ENCODE measurements at regions of chr6 and their contacts with region 1.

Region 1: GRCh38 chr6:38671885-38672467 is 31.0 kb downstream of the GLO1 start:
- DNase-seq: peak; percentile 46
- H3K4me3 Mint-ChIP-seq: no peak overlapping the region
- H3K27ac Mint-ChIP-seq: no peak overlapping the region
- H3K4me1 Mint-ChIP-seq: peaks cover 8% of the 10 kb centered on the region
- H3K27me3 Mint-ChIP-seq: no peaks in the 10 kb centered on the region
- CTCF ChIP-seq: no peak

Region 2: DNA sequence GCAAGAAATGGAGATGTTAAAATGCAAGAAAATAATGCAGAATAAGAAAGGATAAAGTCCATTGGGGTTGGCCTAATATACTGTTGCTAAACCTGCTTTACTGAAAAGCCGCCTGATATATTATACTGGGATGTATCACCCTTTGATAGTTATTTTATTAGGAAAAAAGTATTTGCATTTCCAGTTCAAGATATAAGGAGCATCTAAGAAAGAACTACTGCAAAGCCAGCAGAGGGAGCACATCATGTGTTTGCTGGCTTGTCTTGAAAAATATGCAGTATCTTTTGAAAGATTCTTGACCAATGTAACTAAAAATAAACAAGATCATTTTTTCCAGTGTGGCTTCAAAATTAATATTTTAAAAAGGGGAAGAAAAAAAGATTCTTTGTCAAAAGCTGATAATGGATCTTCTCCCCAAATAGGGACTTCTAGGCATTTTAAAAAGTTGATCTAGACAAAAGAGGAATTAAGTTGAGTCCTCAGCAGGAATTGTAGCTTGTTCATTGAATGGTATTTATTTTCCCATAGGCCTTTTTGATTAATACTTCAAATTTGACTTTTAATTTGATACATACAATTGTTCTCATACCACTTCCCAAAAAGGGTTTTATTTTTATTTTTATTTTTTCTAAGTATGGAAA is 637.6 kb before region 1 on chr6:
- CTCF ChIA-PET with region 1: no interaction called
- intact Hi-C with region 1: loop called (anchors 10 kb)
- DNase-seq: no peak
- H3K4me3 Mint-ChIP-seq: no peak overlapping the region
- H3K27ac Mint-ChIP-seq: no peak overlapping the region
- H3K4me1 Mint-ChIP-seq: peaks cover 27% of the 10 kb centered on the region
- H3K27me3 Mint-ChIP-seq: no peaks in the 10 kb centered on the region
- CTCF ChIP-seq: peak; percentile 25

Region 3: DNA sequence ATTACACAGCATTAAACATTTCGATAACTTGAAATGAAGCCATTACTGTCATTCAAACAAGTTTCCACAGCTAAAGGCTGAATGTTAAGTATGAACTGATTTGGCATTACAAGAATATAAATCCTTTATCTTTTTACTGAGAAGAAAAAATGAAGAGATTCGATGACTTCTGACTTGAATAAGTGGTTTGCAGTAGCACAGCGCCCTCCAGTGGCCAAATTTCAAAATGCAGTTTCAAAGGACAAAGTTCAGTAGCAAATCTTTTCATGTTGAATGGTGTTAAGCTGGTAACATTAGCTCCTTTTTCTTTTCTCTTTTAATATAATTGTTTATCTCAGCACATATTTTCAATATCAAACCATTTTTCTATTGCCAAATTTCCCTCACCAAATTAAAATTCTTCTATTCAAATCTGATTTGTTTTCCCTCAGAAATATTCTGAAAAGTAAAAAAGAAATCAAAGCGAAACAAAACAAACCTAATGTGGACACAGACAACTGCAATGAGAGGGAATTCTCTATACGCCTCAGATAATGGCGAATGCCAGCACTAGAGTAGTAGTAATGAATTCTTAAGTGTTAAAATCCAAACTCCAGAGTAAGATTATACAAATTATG is 177.9 kb before region 1 on chr6:
- CTCF ChIA-PET with region 1: no interaction called
- intact Hi-C with region 1: loop called (anchors 5 kb)
- DNase-seq: peak; percentile 78
- H3K4me3 Mint-ChIP-seq: no peak overlapping the region
- H3K27ac Mint-ChIP-seq: no peak overlapping the region
- H3K4me1 Mint-ChIP-seq: peaks cover 7% of the 10 kb centered on the region
- H3K27me3 Mint-ChIP-seq: no peaks in the 10 kb centered on the region
- CTCF ChIP-seq: peak; percentile 92

Region 4: GRCh38 chr6:38603966-38604365 is 68.0 kb before region 1 on chr6:
- CTCF ChIA-PET with region 1: no interaction called
- intact Hi-C with region 1: loop called (anchors 10 kb)
- DNase-seq: no peak
- H3K4me3 Mint-ChIP-seq: no peak overlapping the region
- H3K27ac Mint-ChIP-seq: no peak overlapping the region
- H3K4me1 Mint-ChIP-seq: no peaks in the 10 kb centered on the region
- H3K27me3 Mint-ChIP-seq: no peaks in the 10 kb centered on the region
- CTCF ChIP-seq: no peak

Measured in Calu3 (cell line).